A549 (cell line): ENCODE measurements at regions of chr1 and their contacts with region 1.

Region 1: DNA sequence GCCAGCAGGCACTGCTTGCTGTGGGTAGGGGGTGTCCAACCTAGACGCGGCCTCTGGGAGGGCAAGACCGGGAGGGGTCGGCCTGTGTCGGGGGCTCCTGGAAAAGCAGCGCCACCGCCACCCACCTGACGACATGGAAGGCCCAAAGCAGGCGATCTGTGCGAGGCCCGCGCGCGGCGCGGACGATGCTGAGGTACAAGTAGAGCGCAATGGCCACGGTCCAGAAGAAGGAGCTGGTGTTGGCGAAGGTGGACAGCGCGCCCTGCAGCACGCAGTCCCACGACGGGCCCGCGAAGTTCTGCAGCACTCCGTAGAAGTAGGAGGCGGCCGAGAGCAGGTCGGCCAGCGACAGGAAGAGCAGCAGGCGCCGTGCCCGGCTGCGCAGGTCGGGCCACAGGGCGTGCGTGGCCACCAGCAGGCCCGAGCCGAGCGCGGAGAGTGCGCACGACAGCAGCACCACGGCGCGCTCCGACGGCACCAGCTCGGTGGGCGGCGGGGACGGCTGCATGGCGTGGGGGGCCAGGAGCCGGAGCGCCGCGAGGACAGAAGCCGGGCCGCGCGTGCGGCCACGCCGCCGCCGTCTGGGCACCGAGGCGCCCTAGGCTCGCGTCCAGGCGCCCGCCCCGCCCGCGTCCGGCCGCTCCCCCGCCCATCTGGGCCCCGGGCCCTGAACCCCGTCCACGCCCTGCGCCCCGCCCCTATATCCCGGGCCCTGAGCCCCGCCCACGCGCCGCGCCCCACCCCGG is at the start of gene GPR157:
- DNase-seq: peak; percentile 85 to 86
- ATAC-seq: peak; percentile 80 to 86
- H3K4me3 ChIP-seq: peak within 1 kb of the TSS; percentile 69
- H3K27ac ChIP-seq: peak within 1 kb of the TSS; percentile 83 to 85
- H3K4me1 ChIP-seq: peaks cover 14% of the 10 kb centered on the region
- CTCF ChIP-seq: no peak
- EP300 ChIP-seq: no peak
- POLR2A ChIP-seq: peak; percentile 81
- RAD21 ChIP-seq: no peak
- polyA plus RNA-seq, gene GPR157: 3.6 and 3.7 TPM in 2 replicates

Region 2: DNA sequence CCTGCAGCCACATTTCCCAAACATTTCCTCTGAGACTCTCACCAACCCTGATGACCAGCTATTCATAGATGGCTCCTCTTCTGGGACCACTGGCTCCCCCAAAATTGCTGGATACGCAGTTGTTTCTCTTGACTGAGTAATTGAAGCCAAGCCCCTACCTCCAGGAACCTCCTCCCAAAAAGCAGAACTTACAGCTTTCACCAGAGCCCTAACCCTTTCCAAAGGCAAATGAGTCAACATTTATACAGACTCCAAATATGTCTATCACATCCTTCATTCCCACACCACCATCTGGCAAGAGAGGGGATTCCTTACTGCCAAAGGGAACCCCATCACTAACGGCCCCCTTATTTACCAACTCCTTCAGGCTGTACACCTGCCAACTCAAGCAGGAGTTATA is 203.3 kb before region 1 on chr1:
- CTCF ChIA-PET with region 1: no interaction called
- POLR2A ChIA-PET with region 1: no interaction called
- DNase-seq: no peak
- ATAC-seq: no peak
- H3K4me3 ChIP-seq: no peak overlapping the region
- H3K27ac ChIP-seq: no peak overlapping the region
- H3K4me1 ChIP-seq: no peaks in the 10 kb centered on the region
- CTCF ChIP-seq: no peak
- EP300 ChIP-seq: no peak
- POLR2A ChIP-seq: no peak
- RAD21 ChIP-seq: no peak

Region 3: GRCh38 chr1:9196129-9197040 is 67.7 kb after region 1 on chr1:
- CTCF ChIA-PET with region 1: interaction called, 14 read pairs
- POLR2A ChIA-PET with region 1: no interaction called
- DNase-seq: peak; percentile 29 to 48
- ATAC-seq: peak; percentile 72 to 84; a peak in 5 of 6 replicates
- H3K4me3 ChIP-seq: no peak overlapping the region
- H3K27ac ChIP-seq: peak overlapping the region; percentile 50 to 81; a peak in 5 of 6 replicates
- H3K4me1 ChIP-seq: peaks cover 29% of the 10 kb centered on the region
- CTCF ChIP-seq: peak; percentile 72
- EP300 ChIP-seq: no peak
- POLR2A ChIP-seq: no peak
- RAD21 ChIP-seq: peak; percentile 89 to 92